ENCODE measurements at regions of chr3 and their contacts with region 1.

Region 1: DNA sequence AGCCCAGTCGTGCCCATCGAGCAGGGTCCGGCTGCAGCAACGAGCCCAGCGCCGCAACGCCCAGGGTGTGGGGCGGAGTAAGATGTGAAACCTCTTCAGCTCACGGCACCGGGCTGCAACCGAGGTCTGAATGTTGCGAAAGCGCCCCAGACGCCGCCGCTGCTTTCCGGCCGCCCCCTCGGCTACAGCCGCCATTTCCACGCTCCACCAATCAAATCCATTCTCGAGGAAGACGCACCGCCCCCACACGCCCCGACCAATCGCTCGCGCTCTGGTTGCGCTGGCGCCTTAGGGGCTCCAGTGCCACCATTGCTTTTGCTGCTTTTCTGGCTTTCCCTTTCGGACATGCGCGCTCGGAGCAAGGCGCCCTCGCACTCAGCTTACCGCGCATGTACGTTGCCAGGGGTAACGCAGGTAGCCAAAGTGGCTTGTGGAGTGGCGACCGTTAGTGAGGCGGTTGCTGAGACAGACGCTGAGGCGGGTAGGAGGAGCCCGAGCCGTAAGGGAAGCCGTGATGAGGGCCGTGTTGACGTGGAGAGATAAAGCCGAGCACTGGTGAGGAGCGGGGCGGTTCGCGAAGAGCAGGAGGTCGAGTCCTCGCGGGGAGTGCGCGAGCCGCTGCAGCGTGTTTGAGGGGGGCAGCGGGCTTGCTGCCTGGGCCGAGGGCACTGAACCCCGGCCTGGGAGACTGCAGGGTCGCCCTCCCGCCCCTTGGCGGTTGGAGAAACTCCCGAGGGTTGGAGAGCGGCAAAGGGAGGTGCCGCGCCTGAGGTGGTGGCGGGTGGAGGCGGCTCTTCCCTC is at the starts of genes IFT122 and MBD4:
- DNase-seq: peak; percentile 99
- H3K4me3 ChIP-seq: peak within 1 kb of the TSS; percentile 88
- H3K27ac ChIP-seq: peak within 1 kb of the TSS; percentile 84
- H3K4me1 ChIP-seq: peaks cover 53% of the 10 kb centered on the region
- CTCF ChIP-seq: no peak
- total RNA-seq, gene IFT122: 21.6 and 25.8 TPM in 2 replicates
- total RNA-seq, gene MBD4: 42.4 and 46.3 TPM in 2 replicates

Region 2: GRCh38 chr3:129183569-129184395 is 256.2 kb before region 1 on chr3 and contains the start of gene CNBP:
- CTCF ChIA-PET with region 1: no interaction called
- POLR2A ChIA-PET with region 1: no interaction called
- intact Hi-C with region 1: loop called (anchors 5 kb)
- DNase-seq: peak; percentile 96
- H3K4me3 ChIP-seq: peak within 1 kb of the TSS; percentile 83
- H3K27ac ChIP-seq: peak within 1 kb of the TSS; percentile 72
- H3K4me1 ChIP-seq: peaks cover 62% of the 10 kb centered on the region
- CTCF ChIP-seq: no peak
- total RNA-seq, gene CNBP: 336 and 350 TPM in 2 replicates

Region 3: DNA sequence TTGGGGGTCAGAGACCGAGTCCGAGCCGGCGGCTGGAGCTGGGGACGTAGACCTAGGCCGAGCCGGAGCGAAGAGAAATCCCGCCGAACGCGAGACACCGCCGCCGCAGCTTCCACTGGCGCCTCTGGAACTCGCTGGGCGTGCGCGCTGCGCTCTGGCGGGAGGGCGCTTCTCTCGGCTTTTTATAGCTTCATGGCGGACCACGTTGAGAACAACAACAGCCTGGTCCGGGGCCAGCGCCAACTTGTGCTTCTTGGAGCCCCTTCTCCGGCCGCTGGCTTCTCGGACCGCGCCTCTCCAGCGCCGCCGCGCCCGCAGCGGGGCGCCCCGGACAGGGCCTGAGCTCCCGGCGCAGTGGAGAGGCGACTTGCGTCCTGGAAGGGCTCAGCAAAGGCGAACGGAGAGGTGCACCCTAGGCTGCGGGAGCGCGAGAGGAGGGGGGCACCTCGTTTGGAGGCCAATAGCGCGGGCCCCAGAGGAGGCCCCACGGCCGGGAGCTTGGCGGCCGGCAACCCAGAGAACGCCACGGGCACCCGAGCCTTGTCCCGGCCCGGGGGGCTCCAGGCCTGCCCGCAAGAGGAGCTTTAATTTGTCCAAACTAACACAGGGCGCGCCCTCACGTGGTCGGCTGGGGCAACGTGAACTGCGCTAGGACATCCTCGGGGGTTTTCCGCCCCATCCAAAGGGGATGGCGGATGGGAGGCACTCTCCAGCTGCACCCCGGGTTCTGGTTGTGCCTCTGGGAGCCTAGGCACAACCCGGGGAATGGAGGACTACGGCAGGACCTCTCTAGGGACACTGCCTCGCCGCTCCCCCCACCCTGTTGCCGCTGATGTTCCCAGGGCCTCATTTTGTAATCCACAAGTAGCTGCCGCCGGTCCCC is 123.6 kb before region 1 on chr3:
- CTCF ChIA-PET with region 1: no interaction called
- POLR2A ChIA-PET with region 1: interaction called, 7 read pairs
- intact Hi-C with region 1: loop called (anchors 5 kb)
- DNase-seq: peak; percentile 86
- H3K4me3 ChIP-seq: peak overlapping the region; percentile 89
- H3K27ac ChIP-seq: peak overlapping the region; percentile 73
- H3K4me1 ChIP-seq: peaks cover 40% of the 10 kb centered on the region
- CTCF ChIP-seq: peak; percentile 91

Region 4: DNA sequence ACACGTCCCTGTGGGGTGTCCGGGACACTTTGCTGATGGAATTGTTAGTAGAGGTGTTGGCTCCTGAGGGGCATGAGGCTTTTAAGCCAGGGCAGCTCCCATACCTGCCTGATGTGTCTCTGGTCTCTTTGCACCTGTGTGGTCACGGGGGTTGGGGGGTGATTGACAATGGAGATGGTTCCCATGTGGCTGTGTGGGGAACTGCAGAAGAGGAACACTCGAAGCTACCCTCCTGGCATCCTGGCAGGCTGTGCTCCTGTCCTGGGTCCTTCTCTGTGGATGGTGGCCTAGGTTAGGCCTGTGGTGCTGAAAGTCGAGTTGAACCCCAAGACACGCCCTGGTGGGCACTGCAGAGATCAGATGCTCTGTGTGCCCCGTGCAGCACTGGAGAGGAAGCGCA is 88.0 kb before region 1 on chr3:
- CTCF ChIA-PET with region 1: no interaction called
- POLR2A ChIA-PET with region 1: no interaction called
- intact Hi-C with region 1: no loop called
- DNase-seq: peak; percentile 39
- H3K4me3 ChIP-seq: no peak overlapping the region
- H3K27ac ChIP-seq: no peak overlapping the region
- H3K4me1 ChIP-seq: peaks cover 4% of the 10 kb centered on the region
- CTCF ChIP-seq: peak; percentile 58

Region 5: DNA sequence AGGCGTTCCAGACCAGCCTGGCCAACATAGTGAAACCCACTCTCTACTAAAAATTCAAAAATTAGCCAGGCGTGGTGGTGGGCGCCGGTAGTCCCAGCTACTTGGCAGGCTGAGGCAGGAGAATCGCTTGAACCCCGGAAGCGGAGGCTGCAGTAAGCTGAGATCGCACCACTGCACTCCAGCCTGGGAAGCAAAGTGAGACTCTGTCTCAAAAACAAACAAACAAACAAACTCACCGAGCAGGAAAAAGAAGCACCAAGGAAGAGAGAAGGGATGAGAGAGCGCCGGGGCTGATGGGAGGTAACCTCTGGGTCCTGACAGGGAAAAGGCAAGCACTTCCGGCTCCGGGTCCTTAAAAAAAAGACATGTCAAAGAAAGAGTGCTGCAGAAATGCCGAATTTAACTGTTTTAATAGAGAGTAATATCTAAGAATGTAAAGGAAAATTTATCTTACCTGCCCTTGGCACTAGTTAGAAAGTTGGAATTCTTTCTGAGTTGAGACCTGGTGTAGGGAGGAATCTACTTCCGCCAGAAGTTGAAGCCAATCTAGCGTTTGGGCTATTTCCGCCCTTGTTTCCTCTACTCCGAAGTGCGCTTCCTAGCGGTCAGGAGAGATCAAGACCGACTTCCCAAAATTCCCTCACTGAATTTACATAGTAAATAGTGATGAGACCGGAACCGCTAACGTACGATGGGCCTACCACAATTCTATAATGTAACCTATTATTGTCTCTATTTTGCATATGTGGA is 40.7 kb before region 1 on chr3:
- CTCF ChIA-PET with region 1: no interaction called
- POLR2A ChIA-PET with region 1: interaction called, 13 read pairs
- intact Hi-C with region 1: loop called (anchors 1 kb)
- DNase-seq: peak; percentile 96
- H3K4me3 ChIP-seq: peak overlapping the region; percentile 87
- H3K27ac ChIP-seq: peak overlapping the region; percentile 59
- H3K4me1 ChIP-seq: peaks cover 22% of the 10 kb centered on the region
- CTCF ChIP-seq: peak; percentile 89

Region 6: DNA sequence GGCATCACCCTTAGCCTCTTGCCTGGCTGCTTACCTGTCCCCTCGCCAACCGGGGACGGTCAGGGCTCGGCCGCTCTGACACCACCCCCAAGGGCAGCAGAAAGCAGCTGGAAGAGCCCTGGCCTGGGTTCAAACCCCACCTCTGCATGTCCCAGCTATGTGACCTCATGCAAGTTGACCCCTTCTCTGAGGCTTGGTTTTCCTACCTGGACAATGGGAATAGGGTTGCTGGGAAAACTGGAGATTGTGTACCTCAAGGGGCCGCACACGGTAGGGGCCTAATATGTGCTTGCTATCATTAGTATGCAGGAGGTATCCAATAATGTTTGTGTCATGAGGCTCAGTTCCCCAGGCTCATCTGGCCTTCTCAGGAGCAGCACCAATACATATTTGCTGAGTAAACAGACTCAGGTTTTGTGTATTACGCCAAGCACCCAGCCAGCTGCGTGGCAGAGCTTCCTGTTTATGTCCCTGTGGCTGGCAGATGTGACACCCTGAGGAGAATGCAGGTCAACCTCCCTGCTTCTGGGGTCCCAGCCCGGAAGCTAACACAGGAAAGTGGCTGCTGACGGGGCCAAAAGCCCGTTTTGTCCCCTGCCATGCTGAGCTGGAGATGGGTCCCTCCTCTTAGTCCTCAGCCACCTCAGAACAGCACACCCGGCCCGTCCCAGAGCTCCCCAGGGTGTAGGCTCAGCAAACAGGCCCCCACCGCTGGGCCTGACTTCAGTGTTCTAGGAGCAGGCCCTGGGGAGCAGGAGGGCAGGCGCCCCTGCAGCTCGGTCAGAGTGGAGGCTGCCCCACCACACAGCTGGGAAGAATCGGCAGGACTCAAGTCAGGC is 136.7 kb after region 1 on chr3:
- CTCF ChIA-PET with region 1: no interaction called
- POLR2A ChIA-PET with region 1: interaction called, 5 read pairs
- intact Hi-C with region 1: loop called (anchors 2 kb)
- DNase-seq: peak; percentile 98
- H3K4me3 ChIP-seq: peak overlapping the region; percentile 22
- H3K27ac ChIP-seq: peak overlapping the region; percentile 92
- H3K4me1 ChIP-seq: peaks cover 54% of the 10 kb centered on the region
- CTCF ChIP-seq: no peak

Measured in OCI-LY7 (cell line).